WTC11 (cell line): ENCODE measurements at regions of chr10 and their contacts with region 1.

Region 1: DNA sequence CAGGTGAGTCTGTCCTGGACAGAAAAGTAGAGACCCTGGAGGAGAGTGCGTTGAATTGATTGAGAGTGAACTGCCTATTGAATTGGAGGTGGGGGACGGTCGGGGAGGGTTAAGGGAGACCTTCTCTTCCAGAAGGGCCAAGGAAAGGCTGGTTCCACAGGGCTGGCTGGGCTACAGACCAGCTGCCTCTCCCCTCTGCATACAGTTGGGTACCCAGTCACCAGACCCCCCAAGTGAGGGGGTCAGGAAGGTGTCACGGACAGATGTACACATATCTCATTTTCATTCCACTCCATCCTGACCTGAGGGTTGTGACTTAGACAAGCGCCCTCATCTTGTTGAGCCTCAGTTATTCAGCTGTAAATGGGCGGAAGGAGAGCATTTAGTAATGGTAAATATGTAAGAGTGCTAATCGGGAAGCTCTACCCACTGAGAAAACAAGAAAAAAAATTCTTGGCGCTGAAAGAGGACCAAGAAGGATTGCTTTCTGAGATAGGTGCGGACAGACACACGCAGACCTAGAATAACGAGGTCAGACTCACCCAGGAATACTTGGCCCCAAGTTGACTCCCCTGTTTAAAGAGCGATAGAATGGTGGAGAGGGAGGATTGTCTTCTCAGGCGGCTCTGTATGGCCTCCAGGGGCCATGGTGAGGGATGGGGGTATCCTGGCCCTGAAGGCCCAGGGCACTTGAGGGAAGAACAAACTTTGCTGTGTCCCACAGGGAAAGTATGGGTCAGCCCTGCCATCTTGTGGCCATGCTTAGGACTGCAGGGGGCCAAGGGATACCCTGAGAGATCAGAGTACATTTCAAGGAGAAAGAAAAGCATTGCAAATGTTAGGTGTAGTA is 7.2 kb upstream of the MBL2 start:
- DNase-seq: peak; percentile 93
- ATAC-seq: peak; percentile 94
- H3K4me3 Mint-ChIP-seq: no peak overlapping the region
- H3K27ac Mint-ChIP-seq: no peak overlapping the region
- H3K4me1 Mint-ChIP-seq: peaks cover 7% of the 10 kb centered on the region
- H3K27me3 Mint-ChIP-seq: no peaks in the 10 kb centered on the region; the same call in 1 of the 2 replicates
- CTCF ChIP-seq: peak; percentile 92

Region 2: GRCh38 chr10:52644373-52645186 is 135.2 kb before region 1 on chr10:
- CTCF ChIA-PET with region 1: interaction called, 55 read pairs
- POLR2A ChIA-PET with region 1: no interaction called
- DNase-seq: peak; percentile 46
- ATAC-seq: peak; percentile 65
- H3K4me3 Mint-ChIP-seq: no peak overlapping the region
- H3K27ac Mint-ChIP-seq: no peak overlapping the region
- H3K4me1 Mint-ChIP-seq: peaks cover 4% of the 10 kb centered on the region; the same call in 1 of the 2 replicates
- H3K27me3 Mint-ChIP-seq: no peaks in the 10 kb centered on the region
- CTCF ChIP-seq: peak; percentile 68

Region 3: GRCh38 chr10:52740913-52741675 is 38.7 kb before region 1 on chr10:
- CTCF ChIA-PET with region 1: interaction called, 44 read pairs
- POLR2A ChIA-PET with region 1: no interaction called
- DNase-seq: peak; percentile 90
- ATAC-seq: peak; percentile 97
- H3K4me3 Mint-ChIP-seq: no peak overlapping the region
- H3K27ac Mint-ChIP-seq: no peak overlapping the region
- H3K4me1 Mint-ChIP-seq: no peaks in the 10 kb centered on the region
- H3K27me3 Mint-ChIP-seq: no peaks in the 10 kb centered on the region
- CTCF ChIP-seq: peak; percentile 97

Region 4: GRCh38 chr10:52768001-52768532 is 11.7 kb before region 1 on chr10:
- CTCF ChIA-PET with region 1: interaction called, 13 read pairs
- POLR2A ChIA-PET with region 1: no interaction called
- DNase-seq: no peak
- ATAC-seq: no peak
- H3K4me3 Mint-ChIP-seq: no peak overlapping the region
- H3K27ac Mint-ChIP-seq: no peak overlapping the region
- H3K4me1 Mint-ChIP-seq: no peaks in the 10 kb centered on the region
- H3K27me3 Mint-ChIP-seq: no peaks in the 10 kb centered on the region
- CTCF ChIP-seq: no peak

Region 5: GRCh38 chr10:52818019-52818418 is 38.3 kb after region 1 on chr10:
- CTCF ChIA-PET with region 1: interaction called, 15 read pairs
- POLR2A ChIA-PET with region 1: no interaction called
- DNase-seq: no peak
- ATAC-seq: peak; percentile 95
- H3K4me3 Mint-ChIP-seq: no peak overlapping the region
- H3K27ac Mint-ChIP-seq: peak overlapping the region; percentile 70
- H3K4me1 Mint-ChIP-seq: peaks cover 48% of the 10 kb centered on the region
- H3K27me3 Mint-ChIP-seq: no peaks in the 10 kb centered on the region
- CTCF ChIP-seq: peak; percentile 36; the same call in 1 of the 2 replicates